Aorta (tissue), 5 donors: ENCODE measurements at regions of chr13 and their contacts with region 1.

Region 1: GRCh38 chr13:30465585-30466357 is at the start of gene HMGB1:
- DNase-seq: peak; percentile 99
- ATAC-seq: peak; percentile 98
- H3K4me3 ChIP-seq: peak within 1 kb of the TSS; percentile 62 to 69
- H3K27ac ChIP-seq: peak within 1 kb of the TSS; percentile 83 to 94
- H3K4me1 ChIP-seq: peaks cover 0 to 1% of the 10 kb centered on the region in 2 donors
- H3K27me3 ChIP-seq: no peaks in the 10 kb centered on the region
- total RNA-seq, gene HMGB1: 213 to 235 TPM

Region 2: DNA sequence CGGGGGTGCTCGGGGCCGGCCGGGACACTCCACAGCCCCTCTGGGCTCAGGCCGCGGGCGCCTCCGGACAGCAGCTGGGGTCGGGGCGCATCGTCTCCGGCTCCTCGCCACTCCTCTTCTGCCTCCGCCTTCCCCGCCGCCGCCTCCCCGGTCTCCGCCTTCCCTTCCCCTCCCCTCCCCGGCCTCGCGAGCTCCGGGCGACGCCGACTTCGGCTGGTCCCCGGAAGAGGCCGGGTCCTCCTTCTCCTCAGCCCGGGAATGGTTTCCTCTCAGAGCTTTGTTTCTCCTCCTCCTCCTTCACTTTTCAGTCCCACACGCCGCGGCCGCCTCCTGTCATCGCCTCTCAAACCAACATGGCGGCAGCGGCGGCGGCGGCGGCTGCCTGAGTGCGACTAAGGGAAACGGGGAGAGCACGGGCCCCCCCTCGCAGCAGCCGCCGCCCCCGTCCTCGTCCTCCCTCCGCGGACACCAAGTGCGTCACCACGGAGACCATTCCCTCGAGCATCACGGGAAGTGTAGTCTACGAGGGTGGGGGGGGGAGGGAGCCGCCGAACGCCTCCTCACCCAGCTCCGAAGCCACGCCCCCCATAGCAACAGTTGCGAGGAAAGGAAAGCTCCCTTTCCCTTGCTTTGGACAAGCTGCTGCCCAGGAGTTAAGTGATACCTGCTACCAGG is 615.4 kb before region 1 on chr13 and contains the start of gene UBL3:
- intact Hi-C with region 1: loop called in 1 of 2 experiments (anchors 10 kb)
- DNase-seq: peak; percentile 98
- ATAC-seq: peak; percentile 96
- H3K4me3 ChIP-seq: peak within 1 kb of the TSS; percentile 71 to 85
- H3K27ac ChIP-seq: peak within 1 kb of the TSS; percentile 86 to 96
- H3K4me1 ChIP-seq: no peaks in the 10 kb centered on the region
- H3K27me3 ChIP-seq: no peaks in the 10 kb centered on the region
- total RNA-seq, gene UBL3: 24.2 to 29.4 TPM

Region 3: DNA sequence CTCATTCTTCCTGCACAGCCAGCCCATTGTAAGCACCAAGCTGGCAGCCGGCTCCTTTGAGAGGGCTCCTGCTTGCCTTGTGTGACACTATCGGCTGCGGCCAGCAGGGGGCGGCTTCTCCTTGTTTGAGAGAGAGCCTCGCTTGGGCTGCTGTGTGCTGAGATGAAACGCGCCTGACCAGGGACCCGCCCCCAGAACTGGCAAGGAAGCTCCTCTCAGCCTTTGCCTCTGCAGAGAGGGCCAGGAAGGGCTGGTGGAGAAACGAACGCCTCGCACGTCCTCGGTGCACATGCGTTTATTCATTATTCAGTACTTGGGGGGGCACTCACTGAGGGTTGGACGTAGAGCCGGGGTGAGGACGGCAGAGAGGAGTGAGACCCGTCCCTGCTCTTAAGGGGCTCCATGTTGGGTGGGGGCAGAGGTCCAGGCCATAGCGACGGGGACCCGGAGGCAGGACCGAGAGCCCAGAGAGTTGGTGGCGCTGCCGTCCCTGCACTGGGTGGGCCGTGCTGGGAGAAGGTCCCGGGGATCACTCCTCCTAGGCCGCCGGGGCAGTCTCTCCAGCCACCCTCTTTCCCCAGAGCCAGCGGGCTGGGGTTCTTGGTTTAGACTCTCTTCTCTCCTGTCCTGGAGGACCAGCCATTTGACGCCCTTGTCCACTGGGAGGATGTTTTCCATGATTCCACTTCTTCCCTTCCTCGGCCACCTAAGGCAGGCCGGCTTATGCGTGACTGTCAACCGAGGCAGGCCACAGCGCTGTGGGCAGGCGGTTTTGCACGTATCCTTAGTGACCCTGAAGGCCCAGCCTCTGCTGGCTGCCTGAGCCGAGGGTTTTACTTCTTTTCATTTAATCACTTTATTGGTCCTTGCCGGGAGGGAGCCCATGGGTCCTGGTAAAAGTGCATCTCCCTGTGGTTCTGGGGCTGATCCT is 332.9 kb before region 1 on chr13:
- intact Hi-C with region 1: loop called (anchors 5 to 10 kb)
- DNase-seq: peak; percentile 98 to 100
- ATAC-seq: peak; percentile 94
- H3K4me3 ChIP-seq: no peak overlapping the region
- H3K27ac ChIP-seq: no peak overlapping the region
- H3K4me1 ChIP-seq: no peaks in the 10 kb centered on the region
- H3K27me3 ChIP-seq: no peaks in the 10 kb centered on the region

Region 4: DNA sequence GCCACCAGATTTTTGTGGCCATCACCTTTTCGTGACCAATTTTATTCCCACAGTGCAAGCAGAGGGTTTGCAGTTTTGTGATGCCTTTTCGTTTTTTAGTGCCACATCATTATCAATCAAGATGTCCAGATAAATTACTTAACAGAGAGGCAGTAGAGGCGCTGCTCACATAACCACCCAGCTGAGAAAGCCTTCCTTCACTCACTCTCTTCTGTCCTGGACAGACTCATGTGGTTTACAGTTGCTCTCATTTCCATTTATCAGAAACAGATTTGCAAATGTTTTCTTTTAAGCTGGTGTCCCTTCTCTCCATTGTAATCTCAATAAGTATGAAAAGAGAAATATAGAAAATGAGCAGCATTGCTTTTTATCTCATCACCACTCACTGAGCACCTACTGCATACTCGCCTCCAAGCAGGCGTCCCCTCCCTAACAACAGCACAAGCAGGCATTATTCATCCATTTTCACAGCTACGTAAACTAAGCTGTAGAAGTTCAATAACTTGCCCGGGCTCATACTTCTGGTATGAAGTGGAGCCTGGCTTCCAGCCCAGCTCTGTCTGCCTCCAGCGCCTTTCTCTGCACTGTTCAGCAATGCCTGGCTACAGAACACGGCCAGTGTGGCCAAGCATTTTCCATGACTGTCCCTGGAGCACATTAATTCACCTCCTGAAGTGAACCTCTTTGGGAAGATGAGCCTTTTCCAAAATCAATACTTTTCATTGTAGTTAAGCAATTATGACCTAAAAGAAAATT is 123.8 kb before region 1 on chr13:
- intact Hi-C with region 1: loop called in 1 of 2 experiments (anchors 10 kb)
- DNase-seq: peak; percentile 92 to 96
- ATAC-seq: peak; percentile 91
- H3K4me3 ChIP-seq: no peak overlapping the region
- H3K27ac ChIP-seq: peak overlapping the region; percentile 63 to 88
- H3K4me1 ChIP-seq: peaks cover 2 to 15% of the 10 kb centered on the region in 2 donors
- H3K27me3 ChIP-seq: no peaks in the 10 kb centered on the region

Region 5: GRCh38 chr13:30408319-30409101 is 57.3 kb before region 1 on chr13:
- intact Hi-C with region 1: loop called (anchors 1 to 5 kb)
- DNase-seq: peak; percentile 96 to 99
- ATAC-seq: peak; percentile 94
- H3K4me3 ChIP-seq: no peak overlapping the region
- H3K27ac ChIP-seq: peak overlapping the region; percentile 84 to 85
- H3K4me1 ChIP-seq: no peaks in the 10 kb centered on the region
- H3K27me3 ChIP-seq: no peaks in the 10 kb centered on the region

Region 6: DNA sequence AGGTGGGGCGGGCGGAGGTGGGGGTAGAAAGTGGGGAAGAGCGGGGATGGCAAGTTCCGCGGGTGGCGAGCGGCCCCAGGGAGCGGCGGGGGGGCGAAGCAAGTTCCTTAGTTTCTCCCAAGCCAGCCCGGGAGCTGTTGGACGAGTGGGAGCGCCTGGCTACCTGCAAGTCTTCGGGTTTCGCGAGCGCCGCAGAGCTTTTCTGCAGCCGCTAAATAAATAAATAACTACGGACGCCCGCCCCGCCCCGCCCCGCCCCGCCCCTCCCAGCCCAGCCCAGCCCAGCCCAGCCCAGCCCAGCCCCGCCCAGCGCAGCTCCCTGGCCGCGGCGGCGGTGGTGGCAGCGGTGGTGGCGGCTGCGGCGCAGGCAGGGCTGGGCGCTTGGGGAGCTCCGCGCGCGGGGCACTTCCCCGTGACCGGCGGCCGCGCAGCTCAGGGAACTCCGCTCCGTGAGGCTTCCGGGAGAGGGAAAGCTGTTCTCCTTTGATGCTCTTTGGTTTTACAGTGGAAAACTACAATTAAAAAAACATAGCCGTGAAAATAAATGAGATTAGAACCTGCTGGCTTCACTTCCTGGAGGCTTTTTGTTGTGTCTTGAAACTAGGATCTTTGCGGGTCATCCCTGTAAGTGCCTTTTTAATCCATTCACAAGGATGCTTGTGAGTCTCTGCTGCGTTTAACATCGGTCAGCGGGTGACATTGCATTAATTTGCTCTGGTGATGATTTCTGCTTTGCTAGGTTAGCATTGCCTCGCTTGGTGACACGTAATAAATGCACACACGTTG is 43.5 kb before region 1 on chr13 and contains the start of gene UBE2L5:
- intact Hi-C with region 1: loop called in 1 of 2 experiments (anchors 5 kb)
- DNase-seq: peak; percentile 85 to 92
- ATAC-seq: peak; percentile 92
- H3K4me3 ChIP-seq: peak within 1 kb of the TSS; percentile 73 to 92
- H3K27ac ChIP-seq: peak within 1 kb of the TSS; percentile 94 to 95
- H3K4me1 ChIP-seq: no peaks in the 10 kb centered on the region
- H3K27me3 ChIP-seq: no peaks in the 10 kb centered on the region
- total RNA-seq, gene UBE2L5: 1.7 TPM in 1 of 2 donors, not detected in the other

Region 7: GRCh38 chr13:31044377-31045285 is 578.9 kb after region 1 on chr13:
- intact Hi-C with region 1: loop called (anchors 10 kb)
- DNase-seq: peak; percentile 84 to 91
- ATAC-seq: peak; percentile 92
- H3K4me3 ChIP-seq: no peak overlapping the region
- H3K27ac ChIP-seq: no peak overlapping the region
- H3K4me1 ChIP-seq: no peaks in the 10 kb centered on the region
- H3K27me3 ChIP-seq: no peaks in the 10 kb centered on the region